ENCODE measurements at regions of chr12 and their contacts with region 1.

Region 1: DNA sequence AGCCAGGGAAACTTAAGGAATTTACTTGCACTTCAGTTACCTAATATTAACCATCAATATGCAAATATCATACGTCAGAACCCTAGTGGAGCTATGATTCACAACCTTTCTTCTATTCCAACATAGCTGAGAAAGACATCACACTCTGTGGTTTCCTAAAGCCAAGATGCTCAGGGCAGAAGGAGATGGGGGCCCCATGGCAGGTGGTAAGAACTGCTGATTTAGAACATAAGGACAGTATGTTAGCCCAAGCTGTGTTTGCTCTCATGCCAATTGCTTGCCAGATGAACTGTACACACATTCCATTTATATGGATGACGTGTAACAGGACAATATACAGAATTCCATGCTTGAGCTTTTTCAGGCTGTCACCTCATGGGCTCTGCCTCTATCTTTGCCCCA is 34.6 kb downstream of the HECTD4 start:
- DNase-seq: peak in 1 of 10 donors; percentile 71
- H3K4me3 ChIP-seq: no peak overlapping the region
- H3K27ac ChIP-seq: peak overlapping the region in 1 of 59 donors; percentile 83
- H3K27me3 ChIP-seq: no peaks in the 10 kb centered on the region
- CTCF ChIP-seq: no peak

Region 2: GRCh38 chr12:112252184-112252583 is 95.4 kb before region 1 on chr12:
- intact Hi-C with region 1: loop called in 1 of 2 experiments (anchors 10 kb)
- DNase-seq: no peak
- H3K4me3 ChIP-seq: no peak overlapping the region
- H3K27ac ChIP-seq: no peak overlapping the region
- H3K27me3 ChIP-seq: no peaks in the 10 kb centered on the region
- CTCF ChIP-seq: no peak

Measured in dorsolateral prefrontal cortex (tissue), 120 donors.